ENCODE measurements at regions of chr5 and their contacts with region 1.

Region 1: GRCh38 chr5:143222287-143223231 is 180.9 kb downstream of the NR3C1 start:
- DNase-seq: peak; percentile 81 to 95 (median 85)
- H3K4me3 ChIP-seq: peak overlapping the region in 1 of 2 donors; percentile 42
- H3K4me3 Mint-ChIP-seq: peak overlapping the region; percentile 41 to 85 (median 74)
- H3K27ac ChIP-seq: peak overlapping the region; percentile 91
- H3K27ac Mint-ChIP-seq: peak overlapping the region; percentile 95 to 100 (median 98)
- H3K4me1 ChIP-seq: peaks cover 56% of the 10 kb centered on the region
- H3K4me1 Mint-ChIP-seq: peaks cover 34 to 65% (median 50%) of the 10 kb centered on the region in 4 donors
- H3K27me3 ChIP-seq: no peaks in the 10 kb centered on the region
- H3K27me3 Mint-ChIP-seq: peaks cover 0 to 1% of the 10 kb centered on the region in 2 donors

Region 2: DNA sequence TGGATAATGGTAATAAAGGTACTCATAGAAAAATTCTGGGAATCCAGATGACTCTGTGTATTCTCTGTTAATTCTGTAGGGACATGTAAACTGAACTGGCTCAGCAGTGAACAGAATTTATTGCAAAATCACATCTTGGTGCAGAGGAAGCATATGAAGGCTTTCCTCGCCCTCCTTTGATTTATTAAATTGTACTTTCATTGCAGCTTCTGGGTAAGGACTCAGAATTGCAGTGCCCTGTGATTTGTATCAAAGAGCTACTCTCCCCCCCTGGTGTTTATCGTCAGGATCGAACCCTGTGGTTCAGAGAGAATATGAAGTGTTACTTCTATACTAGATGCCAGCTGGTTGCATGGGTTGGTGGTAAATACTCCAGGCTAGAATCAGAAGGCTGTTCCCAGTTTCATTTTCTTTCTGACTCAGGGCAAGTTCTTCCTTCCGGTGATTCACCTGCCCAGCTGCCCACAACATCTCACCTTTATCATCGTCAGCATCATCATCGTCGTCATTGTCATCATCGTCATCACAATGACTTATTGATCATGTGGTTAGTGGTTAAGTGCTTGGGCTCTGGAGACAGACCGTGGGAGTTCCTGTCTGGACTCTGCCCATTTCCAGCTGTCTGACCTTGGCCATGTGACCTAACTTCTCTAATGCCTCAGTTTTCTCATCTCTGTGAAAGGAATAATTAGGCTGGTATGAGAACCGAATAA is 213.6 kb before region 1 on chr5:
- CTCF ChIA-PET with region 1: no interaction called
- POLR2A ChIA-PET with region 1: interaction called, 3 read pairs
- intact Hi-C with region 1: loop called (anchors 5 kb)
- DNase-seq: peak; percentile 83 to 96 (median 87)
- H3K4me3 ChIP-seq: no peak overlapping the region
- H3K4me3 Mint-ChIP-seq: peak overlapping the region; percentile 23 to 71 (median 68)
- H3K27ac ChIP-seq: peak overlapping the region; percentile 63
- H3K27ac Mint-ChIP-seq: peak overlapping the region; percentile 84 to 97 (median 94)
- H3K4me1 ChIP-seq: peaks cover 49% of the 10 kb centered on the region
- H3K4me1 Mint-ChIP-seq: peaks cover 31 to 56% (median 40%) of the 10 kb centered on the region in 4 donors
- H3K27me3 ChIP-seq: no peaks in the 10 kb centered on the region
- H3K27me3 Mint-ChIP-seq: no peaks in the 10 kb centered on the region

Region 3: GRCh38 chr5:143066556-143067281 is 155.8 kb before region 1 on chr5:
- CTCF ChIA-PET with region 1: no interaction called
- POLR2A ChIA-PET with region 1: no interaction called
- intact Hi-C with region 1: no loop called
- DNase-seq: no peak
- H3K4me3 ChIP-seq: no peak overlapping the region
- H3K4me3 Mint-ChIP-seq: peak overlapping the region in 1 of 8 donors; percentile 19
- H3K27ac ChIP-seq: no peak overlapping the region
- H3K27ac Mint-ChIP-seq: peak overlapping the region in 3 of 7 donors; percentile 3 to 75 (median 63)
- H3K4me1 ChIP-seq: peaks cover 8% of the 10 kb centered on the region
- H3K4me1 Mint-ChIP-seq: peaks cover 4 to 10% (median 6%) of the 10 kb centered on the region in 4 donors
- H3K27me3 ChIP-seq: no peaks in the 10 kb centered on the region
- H3K27me3 Mint-ChIP-seq: no peaks in the 10 kb centered on the region

Region 4: GRCh38 chr5:143182901-143183820 is 39.4 kb before region 1 on chr5:
- CTCF ChIA-PET with region 1: interaction called, 3 read pairs
- POLR2A ChIA-PET with region 1: interaction called, 3 read pairs
- intact Hi-C with region 1: loop called (anchors 5 kb)
- DNase-seq: peak; percentile 4 to 68 (median 37)
- H3K4me3 ChIP-seq: no peak overlapping the region
- H3K4me3 Mint-ChIP-seq: peak overlapping the region; percentile 5 to 84 (median 61)
- H3K27ac ChIP-seq: peak overlapping the region; percentile 23
- H3K27ac Mint-ChIP-seq: peak overlapping the region; percentile 48 to 94 (median 76)
- H3K4me1 ChIP-seq: peaks cover 33% of the 10 kb centered on the region
- H3K4me1 Mint-ChIP-seq: peaks cover 36 to 49% (median 42%) of the 10 kb centered on the region in 4 donors
- H3K27me3 ChIP-seq: no peaks in the 10 kb centered on the region
- H3K27me3 Mint-ChIP-seq: no peaks in the 10 kb centered on the region